Dendritic cell treated with granulocyte-macrophage colony-stimulating factor and Interleukin-4, amounts not matched to agents 40 ng/mL and 50 ng/mL, for 4 days (primary cell): ENCODE measurements at regions of chr19 and their contacts with region 1.

Region 1: DNA sequence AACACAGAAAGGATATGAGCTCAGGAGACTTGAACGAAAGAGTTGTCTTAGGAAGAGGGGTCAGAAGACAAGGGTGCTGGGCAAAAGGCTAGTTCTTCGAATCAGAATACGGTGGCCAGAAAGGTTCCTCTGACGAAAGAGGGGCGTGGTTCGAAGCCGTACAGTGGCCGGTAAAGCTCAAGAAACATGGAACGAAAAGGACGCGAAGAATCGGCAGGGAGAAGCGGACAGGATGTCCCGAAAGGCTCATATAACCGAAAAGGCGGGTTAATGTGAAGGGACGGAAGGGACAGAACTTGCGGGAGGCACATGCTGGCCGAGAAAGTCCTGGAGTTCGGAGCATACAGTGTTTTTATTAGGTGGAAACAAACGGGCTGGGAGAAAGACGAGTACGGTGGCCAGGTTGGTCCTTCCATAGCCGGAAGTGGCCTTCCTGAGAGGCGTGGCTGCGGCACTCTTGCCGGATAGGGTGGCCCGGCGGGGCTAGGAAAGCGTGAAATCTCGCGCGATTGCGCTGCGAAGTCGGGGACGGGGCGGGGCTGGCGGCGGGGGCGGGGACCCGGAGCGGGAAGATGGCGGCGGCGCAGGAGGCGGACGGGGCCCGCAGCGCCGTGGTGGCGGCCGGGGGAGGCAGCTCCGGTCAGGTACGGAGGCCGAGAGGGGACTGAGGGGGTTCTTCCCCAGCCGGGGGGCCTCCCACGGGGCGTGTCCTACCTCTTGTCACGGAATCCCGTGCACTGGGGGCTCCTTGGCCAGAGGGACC is at the start of gene CLPTM1:
- H3K4me3 Mint-ChIP-seq: peak within 1 kb of the TSS; percentile 94
- H3K27ac Mint-ChIP-seq: peak within 1 kb of the TSS; percentile 95
- H3K4me1 Mint-ChIP-seq: peaks cover 47% of the 10 kb centered on the region
- H3K27me3 Mint-ChIP-seq: no peaks in the 10 kb centered on the region

Region 2: DNA sequence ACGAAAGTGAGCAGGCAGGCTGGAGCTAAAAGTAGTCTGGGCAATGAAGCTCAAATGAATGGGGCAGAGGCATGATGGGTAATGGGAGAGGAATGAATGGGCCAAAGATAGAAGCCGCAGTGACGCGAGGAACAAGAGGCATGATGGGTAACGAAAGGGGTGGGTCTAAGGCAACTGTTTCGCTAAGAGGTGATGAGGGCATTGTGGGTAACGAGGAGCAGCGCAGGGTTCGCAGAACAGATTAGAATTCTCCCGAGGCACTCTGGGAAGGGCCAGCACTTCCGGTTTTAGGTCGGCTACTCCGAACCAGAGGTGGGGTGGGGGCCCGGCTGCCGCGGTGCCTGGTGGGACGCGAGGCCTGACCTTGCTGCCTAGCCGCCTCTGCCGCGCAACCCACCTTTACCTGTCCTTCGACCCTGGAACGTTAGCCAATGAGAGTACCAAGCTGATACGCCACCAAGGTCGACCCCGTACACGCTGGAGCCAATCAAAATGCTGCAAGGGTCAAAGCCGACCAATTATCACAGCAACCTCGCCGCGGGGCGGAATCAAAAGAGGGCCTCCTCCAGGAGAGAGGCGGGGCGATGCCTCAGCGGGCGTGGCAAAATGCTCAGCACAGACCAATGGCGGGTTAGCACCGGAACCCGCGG is 64.5 kb before region 1 on chr19:
- intact Hi-C with region 1: loop called (anchors 2 kb)
- H3K4me3 Mint-ChIP-seq: peak overlapping the region; percentile 80
- H3K27ac Mint-ChIP-seq: peak overlapping the region; percentile 87
- H3K4me1 Mint-ChIP-seq: peaks cover 35% of the 10 kb centered on the region
- H3K27me3 Mint-ChIP-seq: no peaks in the 10 kb centered on the region

Region 3: GRCh38 chr19:44903602-44904425 is 51.2 kb before region 1 on chr19:
- intact Hi-C with region 1: loop called (anchors 1 kb)
- H3K4me3 Mint-ChIP-seq: no peak overlapping the region
- H3K27ac Mint-ChIP-seq: no peak overlapping the region
- H3K4me1 Mint-ChIP-seq: peaks cover 21% of the 10 kb centered on the region
- H3K27me3 Mint-ChIP-seq: peaks cover 33% of the 10 kb centered on the region

Region 4: DNA sequence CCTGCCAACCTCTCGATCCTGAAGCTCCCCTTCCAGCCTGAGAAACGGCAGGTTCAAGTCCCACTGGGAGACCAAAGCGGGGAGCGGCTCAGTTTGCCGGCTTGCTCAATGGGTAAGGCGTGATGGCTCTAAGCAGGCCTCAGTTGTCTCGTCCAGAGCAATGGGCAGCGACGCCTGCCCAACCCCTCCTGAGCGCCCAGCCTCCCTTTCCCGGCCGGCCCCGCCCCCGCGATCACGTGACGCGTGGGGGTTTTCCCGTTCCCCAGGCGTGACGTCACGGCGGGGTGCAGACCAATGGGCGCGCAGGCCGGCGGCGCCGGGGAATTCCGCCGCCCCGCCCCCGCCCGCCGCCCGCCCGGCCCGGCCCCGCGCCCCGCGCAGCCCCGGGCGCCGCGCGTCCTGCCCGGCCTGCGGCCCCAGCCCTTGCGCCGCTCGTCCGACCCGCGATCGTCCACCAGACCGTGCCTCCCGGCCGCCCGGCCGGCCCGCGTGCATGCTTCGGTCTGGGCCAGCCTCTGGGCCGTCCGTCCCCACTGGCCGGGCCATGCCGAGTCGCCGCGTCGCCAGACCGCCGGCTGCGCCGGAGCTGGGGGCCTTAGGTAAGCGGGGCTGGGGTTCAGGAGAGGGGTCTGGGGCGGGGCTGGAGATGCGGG is 46.2 kb after region 1 on chr19 and contains the start of gene RELB:
- intact Hi-C with region 1: loop called (anchors 5 kb)
- H3K4me3 Mint-ChIP-seq: peak within 1 kb of the TSS; percentile 93
- H3K27ac Mint-ChIP-seq: peak within 1 kb of the TSS; percentile 100
- H3K4me1 Mint-ChIP-seq: peaks cover 19% of the 10 kb centered on the region
- H3K27me3 Mint-ChIP-seq: peaks cover 4% of the 10 kb centered on the region